GM10248 (cell line): ENCODE measurements at regions of chr3 and their contacts with region 1.

Region 1: GRCh38 chr3:15953841-15954240 is 156.1 kb upstream of the ANKRD28 start:
- DNase-seq: no peak
- CTCF ChIP-seq: no peak

Region 2: GRCh38 chr3:15942462-15942861 is 11.4 kb before region 1 on chr3:
- CTCF ChIA-PET with region 1: interaction called, 10 read pairs
- POLR2A ChIA-PET with region 1: no interaction called
- DNase-seq: no peak
- CTCF ChIP-seq: no peak

Region 3: DNA sequence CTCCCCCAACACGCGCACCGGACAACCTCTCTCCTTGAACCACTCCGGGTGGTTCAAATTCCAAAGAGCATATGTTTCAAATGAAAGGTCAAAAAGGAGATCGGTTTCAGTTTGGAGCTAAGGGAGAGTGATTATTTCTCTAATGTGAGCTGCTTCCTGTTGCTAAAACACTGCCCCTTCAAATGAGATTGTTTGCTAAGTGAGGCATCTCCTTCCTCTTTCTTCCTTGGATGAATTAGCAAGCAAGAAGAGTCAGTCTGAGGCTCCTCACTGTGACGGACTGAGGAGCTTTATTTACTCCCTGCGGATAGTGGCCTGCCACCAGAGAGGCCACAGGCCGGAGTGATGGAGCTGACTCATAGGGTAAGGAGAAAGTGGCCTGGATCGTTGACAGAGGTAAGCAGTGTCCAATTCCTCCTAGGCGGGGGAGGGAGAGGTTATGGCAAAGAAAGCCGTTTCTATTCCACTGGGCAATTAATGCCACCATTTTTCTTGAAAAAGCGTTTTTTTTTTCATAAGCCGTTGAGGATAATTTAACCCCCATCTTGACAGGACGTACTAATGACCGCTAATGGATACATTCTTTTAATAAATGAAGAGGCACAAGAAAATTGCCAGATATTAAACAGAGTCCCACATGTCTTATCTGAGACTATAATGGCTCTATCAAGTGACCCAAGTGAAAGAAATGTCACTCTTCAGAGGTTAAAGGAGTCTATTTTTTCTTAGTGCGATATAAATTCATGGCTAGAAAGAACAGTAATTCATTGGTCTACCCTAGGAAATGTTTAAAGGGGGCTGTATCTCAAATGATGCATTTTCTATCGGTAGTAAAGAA is 11.0 kb after region 1 on chr3:
- CTCF ChIA-PET with region 1: interaction called, 14 read pairs
- POLR2A ChIA-PET with region 1: no interaction called
- DNase-seq: no peak
- CTCF ChIP-seq: no peak

Region 4: DNA sequence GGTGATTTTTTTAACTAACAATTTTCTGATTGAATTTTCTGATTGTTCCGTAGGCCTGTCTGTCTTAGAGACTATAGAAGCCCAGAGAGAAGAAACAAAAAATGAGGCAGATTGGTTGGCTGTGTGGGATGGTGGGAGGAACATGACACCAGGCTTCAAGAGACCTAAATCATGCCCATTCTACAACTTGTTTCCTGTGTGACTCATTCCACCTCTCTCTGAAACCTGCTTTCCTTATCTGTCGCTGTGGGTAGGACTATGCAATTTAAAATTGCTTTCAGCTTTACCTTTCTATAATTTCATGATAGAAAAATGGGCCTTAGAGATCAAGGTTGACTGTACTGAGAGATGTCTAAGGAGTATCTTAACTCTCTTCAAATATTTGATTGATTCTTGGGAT is 355.7 kb after region 1 on chr3:
- CTCF ChIA-PET with region 1: no interaction called
- POLR2A ChIA-PET with region 1: no interaction called
- DNase-seq: no peak
- CTCF ChIP-seq: no peak